Activated naive CD4-positive, alpha-beta T cell treated with anti-CD3 and anti-CD28 coated beads for 36 hours (primary cell): ENCODE measurements at regions of chr5 and their contacts with region 1.

Region 1: GRCh38 chr5:140639148-140639979 is at the start of gene TMCO6:
- DNase-seq: peak; percentile 99
- H3K4me3 Mint-ChIP-seq: peak within 1 kb of the TSS; percentile 82
- H3K27ac Mint-ChIP-seq: peak within 1 kb of the TSS; percentile 92
- H3K4me1 Mint-ChIP-seq: peaks cover 41% of the 10 kb centered on the region
- H3K27me3 Mint-ChIP-seq: no peaks in the 10 kb centered on the region
- total RNA-seq, gene TMCO6: 29.0 to 29.5 TPM

Region 2: GRCh38 chr5:140251527-140251973 is 387.8 kb before region 1 on chr5:
- CTCF ChIA-PET with region 1: no interaction called
- intact Hi-C with region 1: loop called (anchors 2 kb)
- DNase-seq: peak; percentile 87
- H3K4me3 Mint-ChIP-seq: no peak overlapping the region
- H3K27ac Mint-ChIP-seq: peak overlapping the region; percentile 68
- H3K4me1 Mint-ChIP-seq: peaks cover 33% of the 10 kb centered on the region
- H3K27me3 Mint-ChIP-seq: no peaks in the 10 kb centered on the region

Region 3: DNA sequence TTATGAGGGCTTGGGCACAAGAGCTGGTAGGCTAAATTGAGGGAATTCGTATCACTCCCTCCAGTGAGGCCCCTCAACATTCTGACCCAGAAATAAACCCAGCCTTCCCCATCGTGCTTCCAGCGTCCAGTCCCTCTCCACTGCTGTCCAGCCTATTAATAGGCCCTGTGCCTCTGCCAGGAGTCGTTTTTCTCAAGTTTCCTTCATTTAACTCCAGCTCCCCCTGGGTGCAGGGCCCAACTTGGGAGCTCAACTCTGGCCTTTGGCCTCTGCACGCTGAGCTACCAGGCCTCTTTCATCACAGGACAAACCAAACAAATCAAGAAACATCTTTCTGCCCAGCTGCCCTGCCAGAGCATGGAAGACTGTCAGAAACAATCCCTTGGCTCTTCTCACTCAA is 303.0 kb before region 1 on chr5:
- CTCF ChIA-PET with region 1: no interaction called
- intact Hi-C with region 1: no loop called
- DNase-seq: no peak
- H3K4me3 Mint-ChIP-seq: no peak overlapping the region
- H3K27ac Mint-ChIP-seq: no peak overlapping the region
- H3K4me1 Mint-ChIP-seq: peaks cover 10% of the 10 kb centered on the region
- H3K27me3 Mint-ChIP-seq: no peaks in the 10 kb centered on the region

Region 4: GRCh38 chr5:140362860-140363630 is 276.3 kb before region 1 on chr5:
- CTCF ChIA-PET with region 1: interaction called, 5 read pairs
- intact Hi-C with region 1: loop called (anchors 1 kb)
- DNase-seq: peak; percentile 92
- H3K4me3 Mint-ChIP-seq: peak overlapping the region; percentile 70
- H3K27ac Mint-ChIP-seq: no peak overlapping the region
- H3K4me1 Mint-ChIP-seq: peaks cover 2% of the 10 kb centered on the region
- H3K27me3 Mint-ChIP-seq: no peaks in the 10 kb centered on the region

Region 5: DNA sequence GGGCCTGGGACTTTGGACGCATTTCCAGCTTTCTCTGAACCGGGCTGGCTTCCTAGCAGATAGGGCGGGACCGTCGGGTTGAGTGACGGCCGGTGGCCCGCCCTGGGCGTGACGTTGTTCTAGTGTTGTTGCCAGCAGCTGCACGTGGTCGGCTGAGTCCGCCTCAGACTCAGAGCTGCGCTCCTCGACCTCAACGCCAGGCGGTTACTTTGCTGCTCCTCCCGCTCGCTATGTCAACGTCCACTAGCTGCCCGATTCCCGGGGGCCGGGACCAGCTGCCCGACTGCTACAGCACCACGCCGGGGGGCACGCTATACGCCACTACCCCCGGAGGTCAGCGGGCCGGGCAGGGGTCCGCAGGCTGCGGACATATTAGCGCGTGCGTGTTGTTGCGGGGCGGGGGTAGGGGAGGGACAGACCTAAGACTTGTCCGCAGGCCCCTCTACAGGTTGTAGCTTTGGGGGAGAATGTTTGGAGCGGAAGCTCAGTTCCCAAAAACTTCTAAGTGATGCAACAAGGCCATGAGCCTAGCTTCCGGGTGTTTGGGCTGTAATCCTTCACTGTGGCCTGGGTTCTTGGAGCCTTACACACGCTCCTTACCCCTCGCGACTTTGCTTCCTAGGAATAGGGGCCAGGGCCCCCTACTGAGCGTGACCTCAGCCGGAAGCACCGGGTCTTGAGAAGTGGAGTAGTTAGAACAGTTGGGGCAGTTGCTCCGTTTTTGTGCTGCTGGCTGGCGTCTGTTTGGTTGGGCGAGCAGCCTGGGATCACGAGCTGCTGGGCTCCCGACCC is 91.7 kb before region 1 on chr5 and contains the start of gene EIF4EBP3:
- CTCF ChIA-PET with region 1: interaction called, 18 read pairs
- intact Hi-C with region 1: loop called (anchors 1 kb)
- DNase-seq: peak; percentile 93
- H3K4me3 Mint-ChIP-seq: peak within 1 kb of the TSS; percentile 87
- H3K27ac Mint-ChIP-seq: peak within 1 kb of the TSS; percentile 94
- H3K4me1 Mint-ChIP-seq: peaks cover 42% of the 10 kb centered on the region
- H3K27me3 Mint-ChIP-seq: no peaks in the 10 kb centered on the region
- total RNA-seq, gene EIF4EBP3: 27.2 to 28.5 TPM

Region 6: GRCh38 chr5:140564196-140565023 is 75.0 kb before region 1 on chr5 and contains the starts of genes APBB3 and SLC35A4:
- CTCF ChIA-PET with region 1: interaction called, 6 read pairs
- intact Hi-C with region 1: loop called (anchors 1 kb)
- DNase-seq: peak; percentile 97
- H3K4me3 Mint-ChIP-seq: peak within 1 kb of the TSS; percentile 96
- H3K27ac Mint-ChIP-seq: peak within 1 kb of the TSS; percentile 93
- H3K4me1 Mint-ChIP-seq: peaks cover 53% of the 10 kb centered on the region
- H3K27me3 Mint-ChIP-seq: no peaks in the 10 kb centered on the region
- total RNA-seq, gene APBB3: 15.4 to 16.5 TPM
- total RNA-seq, gene SLC35A4: 57.1 to 60.1 TPM

Region 7: DNA sequence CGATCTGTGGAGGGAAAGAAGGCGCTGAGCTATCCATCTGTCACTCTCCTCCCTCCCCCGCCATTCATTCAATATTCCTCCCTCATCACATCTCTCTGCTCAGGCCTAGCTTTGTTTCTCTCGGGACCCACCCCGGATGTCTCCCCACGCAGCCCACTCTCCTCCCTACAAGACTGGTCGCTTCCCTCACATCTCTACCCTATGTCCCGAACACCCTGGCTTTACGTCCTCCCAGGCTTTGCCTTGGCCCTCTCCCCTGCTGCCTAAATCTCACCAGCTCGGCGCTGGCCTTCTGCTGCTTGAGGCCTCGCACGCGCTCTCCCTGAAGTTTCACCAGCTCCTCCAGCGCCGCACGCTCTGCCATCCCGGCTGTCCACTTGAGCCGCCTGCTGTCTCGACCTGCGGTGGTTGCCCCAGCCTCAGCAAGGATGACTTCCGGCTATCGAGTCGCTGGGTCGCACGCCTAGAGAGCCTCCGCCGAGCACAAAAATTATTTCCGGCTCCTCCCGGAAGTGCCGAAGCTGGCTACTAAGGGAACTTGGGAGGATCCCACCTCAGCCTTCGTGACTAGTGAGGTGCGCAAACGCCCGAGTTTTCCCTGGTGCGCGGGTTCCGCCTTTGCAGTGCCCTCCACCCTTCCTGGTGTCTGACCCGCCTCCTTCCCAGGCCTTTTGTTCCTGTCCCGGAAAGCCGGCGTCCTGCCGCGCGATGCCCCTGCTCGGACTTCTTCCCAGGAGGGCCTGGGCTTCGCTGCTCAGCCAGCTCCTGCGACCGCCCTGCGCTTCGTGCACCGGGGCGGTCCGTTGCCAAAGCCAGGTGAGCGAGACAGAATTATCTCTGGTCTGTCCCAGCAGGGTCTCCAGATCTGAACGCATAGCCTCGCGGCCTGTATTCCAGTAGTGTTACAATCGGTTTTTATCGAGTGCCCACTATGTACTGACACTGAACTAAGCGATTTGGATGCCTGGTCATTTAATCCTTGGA is 51.9 kb after region 1 on chr5 and contains the starts of genes HARS1 and HARS2:
- CTCF ChIA-PET with region 1: interaction called, 3 read pairs
- intact Hi-C with region 1: loop called (anchors 2 kb)
- DNase-seq: peak; percentile 92
- H3K4me3 Mint-ChIP-seq: peak within 1 kb of the TSS; percentile 100
- H3K27ac Mint-ChIP-seq: peak within 1 kb of the TSS; percentile 97
- H3K4me1 Mint-ChIP-seq: peaks cover 35% of the 10 kb centered on the region
- H3K27me3 Mint-ChIP-seq: no peaks in the 10 kb centered on the region
- total RNA-seq, gene HARS1: 69.0 to 74.8 TPM
- total RNA-seq, gene HARS2: 27.4 to 29.3 TPM

Region 8: GRCh38 chr5:140710899-140711552 is 71.7 kb after region 1 on chr5:
- CTCF ChIA-PET with region 1: no interaction called
- intact Hi-C with region 1: loop called (anchors 2 kb)
- DNase-seq: peak; percentile 94
- H3K4me3 Mint-ChIP-seq: peak overlapping the region; percentile 92
- H3K27ac Mint-ChIP-seq: peak overlapping the region; percentile 95
- H3K4me1 Mint-ChIP-seq: peaks cover 18% of the 10 kb centered on the region
- H3K27me3 Mint-ChIP-seq: peaks cover 3% of the 10 kb centered on the region